Activated naive CD4-positive, alpha-beta T cell treated with anti-CD3 and anti-CD28 coated beads, Interleukin-2, amount 10 ng/mL, durations not matched to agents 7 days and 5 days (primary cell): ENCODE measurements at regions of chr3 and their contacts with region 1.

Region 1: GRCh38 chr3:45507820-45508317 is 86.7 kb upstream of the LIMD1 start:
- DNase-seq: no peak
- H3K4me3 Mint-ChIP-seq: no peak overlapping the region
- H3K27ac Mint-ChIP-seq: no peak overlapping the region
- H3K4me1 Mint-ChIP-seq: no peaks in the 10 kb centered on the region
- H3K27me3 Mint-ChIP-seq: no peaks in the 10 kb centered on the region

Region 2: DNA sequence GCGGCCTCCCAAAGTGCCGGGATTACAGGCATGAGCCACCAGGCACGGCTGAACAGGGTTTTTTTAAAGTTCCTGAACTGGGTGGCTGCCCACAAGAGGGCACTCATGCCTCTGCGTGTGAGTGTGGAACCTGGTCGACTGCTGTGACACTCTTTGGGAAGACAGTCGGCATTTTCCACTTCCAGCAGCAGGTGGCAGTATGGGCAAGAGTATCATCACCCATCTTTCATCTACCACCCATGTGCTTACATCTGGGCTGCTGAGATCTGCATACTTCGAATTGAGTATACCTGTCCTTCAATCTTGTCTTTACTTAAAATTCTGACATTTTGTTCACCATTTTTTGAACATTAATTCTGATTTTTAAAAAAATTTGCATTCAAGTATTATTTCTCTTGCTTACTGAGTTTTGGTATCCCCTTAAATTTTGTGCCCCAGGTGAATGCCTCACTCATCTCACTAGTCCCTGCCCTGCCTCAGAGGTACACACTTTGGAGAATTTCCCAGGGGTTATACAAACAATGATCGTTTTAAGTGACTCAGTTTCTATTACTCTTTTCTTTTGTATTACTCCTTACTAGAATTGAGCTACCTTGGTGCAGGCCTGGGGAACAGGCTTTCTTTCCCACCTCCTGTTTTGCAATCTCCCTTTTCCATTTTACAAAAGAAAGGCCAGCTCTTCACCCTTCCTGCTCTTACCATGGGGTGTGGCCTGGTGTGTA is 470.0 kb before region 1 on chr3:
- CTCF ChIA-PET with region 1: interaction called, 39 read pairs
- DNase-seq: peak; percentile 96
- H3K4me3 Mint-ChIP-seq: no peak overlapping the region
- H3K27ac Mint-ChIP-seq: no peak overlapping the region
- H3K4me1 Mint-ChIP-seq: peaks cover 59% of the 10 kb centered on the region
- H3K27me3 Mint-ChIP-seq: peaks cover 71% of the 10 kb centered on the region

Region 3: GRCh38 chr3:45546716-45547701 is 39.1 kb after region 1 on chr3:
- CTCF ChIA-PET with region 1: interaction called, 16 read pairs
- DNase-seq: peak; percentile 43
- H3K4me3 Mint-ChIP-seq: no peak overlapping the region
- H3K27ac Mint-ChIP-seq: peak overlapping the region; percentile 2
- H3K4me1 Mint-ChIP-seq: no peaks in the 10 kb centered on the region
- H3K27me3 Mint-ChIP-seq: no peaks in the 10 kb centered on the region

Region 4: DNA sequence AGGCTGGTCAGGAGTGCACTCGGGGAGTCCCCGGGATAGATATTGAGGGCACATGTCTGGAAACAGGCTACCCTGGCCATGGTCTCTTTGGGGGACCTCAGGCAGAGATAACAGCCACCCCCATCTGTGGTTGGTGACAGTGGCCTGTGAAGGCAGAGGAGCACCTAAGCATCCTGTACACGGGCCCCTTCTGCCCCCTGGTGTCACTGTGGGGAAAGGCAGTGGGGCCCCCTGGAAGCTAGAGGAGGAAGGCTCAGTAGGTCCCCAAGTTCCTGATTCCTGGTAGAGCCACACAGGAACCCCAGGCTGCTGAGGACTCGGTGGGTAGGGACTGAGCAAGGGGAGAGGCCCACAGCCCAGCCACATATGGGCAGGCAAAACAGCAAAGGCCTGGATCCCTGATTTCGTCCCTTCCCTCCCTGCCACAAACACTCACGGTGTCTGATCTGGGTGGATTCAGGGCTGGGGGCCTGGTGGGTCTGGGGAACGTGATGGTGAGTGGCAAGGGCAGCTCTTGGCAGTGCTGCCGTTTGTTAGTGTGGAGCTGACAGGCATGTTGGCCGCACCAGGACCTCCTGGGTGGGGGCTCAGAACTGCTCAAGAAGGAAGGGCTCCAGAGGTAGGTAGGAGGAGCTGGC is 421.3 kb after region 1 on chr3:
- CTCF ChIA-PET with region 1: no interaction called
- DNase-seq: peak; percentile 78
- H3K4me3 Mint-ChIP-seq: no peak overlapping the region
- H3K27ac Mint-ChIP-seq: no peak overlapping the region
- H3K4me1 Mint-ChIP-seq: no peaks in the 10 kb centered on the region
- H3K27me3 Mint-ChIP-seq: no peaks in the 10 kb centered on the region